GM10248 (cell line): ENCODE measurements at regions of chr6 and their contacts with region 1.

Region 1: GRCh38 chr6:17584241-17584803 is 15.8 kb upstream of the FAM8A1 start:
- DNase-seq: peak; percentile 59
- CTCF ChIP-seq: peak; percentile 72

Region 2: DNA sequence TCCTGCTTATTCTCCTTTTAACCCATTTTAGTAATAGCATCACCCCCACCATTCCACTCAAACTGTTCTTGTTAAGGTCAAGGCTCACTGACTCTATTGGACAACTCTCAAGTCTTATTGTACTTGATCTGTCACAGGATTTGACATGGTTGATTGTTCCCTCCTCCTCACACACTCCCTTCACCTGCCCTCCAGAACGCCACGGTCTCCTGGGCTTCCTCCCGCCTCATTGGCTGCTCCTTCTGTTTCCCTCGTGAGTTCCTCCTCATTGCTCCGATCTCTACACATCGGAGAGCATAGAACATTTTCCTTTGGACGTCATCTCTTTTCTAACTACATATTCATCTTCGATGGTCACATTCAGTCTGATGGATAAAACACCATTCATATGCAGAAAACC is 427.4 kb before region 1 on chr6:
- CTCF ChIA-PET with region 1: interaction called, 10 read pairs
- POLR2A ChIA-PET with region 1: no interaction called
- DNase-seq: no peak
- CTCF ChIP-seq: no peak

Region 3: DNA sequence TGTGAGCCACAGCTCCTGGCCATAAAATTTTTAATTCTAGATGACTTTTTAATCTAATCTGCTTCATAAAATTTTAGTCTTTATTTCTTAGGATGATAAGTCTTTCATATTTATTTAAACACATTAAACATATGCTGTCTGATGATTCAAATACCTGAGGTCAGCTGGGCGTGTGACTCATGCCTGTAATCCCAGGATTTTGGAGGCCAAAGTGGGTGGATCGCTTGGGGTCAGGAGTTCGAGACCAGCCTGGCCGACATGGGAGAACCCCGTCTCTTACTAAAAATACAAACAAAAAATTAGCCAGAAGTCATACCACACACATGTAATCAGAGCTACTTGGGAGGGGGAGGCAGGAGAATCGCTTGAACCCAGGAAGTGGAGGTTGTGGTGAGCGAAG is 250.1 kb before region 1 on chr6:
- CTCF ChIA-PET with region 1: no interaction called
- POLR2A ChIA-PET with region 1: no interaction called
- DNase-seq: no peak
- CTCF ChIP-seq: no peak

Region 4: DNA sequence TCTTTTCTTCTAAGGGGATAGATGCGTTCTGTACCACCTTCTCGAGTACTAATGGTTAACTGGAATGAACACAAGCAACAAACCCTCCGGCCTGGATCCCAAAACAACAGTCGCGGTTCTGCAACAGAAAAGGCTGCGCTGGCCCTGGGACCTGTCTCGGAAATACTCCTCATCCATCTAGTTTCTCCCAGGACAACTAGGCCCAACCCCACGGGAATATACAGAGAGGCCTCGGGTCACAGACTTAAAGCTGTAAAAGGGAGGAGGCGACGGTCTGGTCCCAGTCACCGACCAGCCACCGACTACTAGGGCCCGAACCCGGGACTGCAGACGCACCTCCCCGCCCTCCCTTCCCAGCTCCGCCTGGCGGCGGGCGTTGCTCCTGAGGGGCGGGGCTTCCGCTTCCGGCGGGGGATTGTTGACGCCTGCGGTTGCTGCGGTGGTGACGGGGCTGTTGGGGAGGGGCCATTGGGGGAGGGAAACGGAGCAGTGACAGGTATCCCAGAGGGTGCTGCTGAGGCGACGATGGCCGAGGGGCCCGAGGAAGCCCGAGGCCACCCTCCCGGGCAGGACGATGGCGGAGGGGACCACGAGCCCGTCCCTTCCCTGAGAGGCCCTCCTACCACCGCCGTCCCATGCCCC is 15.7 kb after region 1 on chr6 and contains the start of gene FAM8A1:
- CTCF ChIA-PET with region 1: interaction called, 10 read pairs
- POLR2A ChIA-PET with region 1: interaction called, 4 read pairs
- DNase-seq: peak; percentile 95
- CTCF ChIP-seq: peak; percentile 31

Region 5: DNA sequence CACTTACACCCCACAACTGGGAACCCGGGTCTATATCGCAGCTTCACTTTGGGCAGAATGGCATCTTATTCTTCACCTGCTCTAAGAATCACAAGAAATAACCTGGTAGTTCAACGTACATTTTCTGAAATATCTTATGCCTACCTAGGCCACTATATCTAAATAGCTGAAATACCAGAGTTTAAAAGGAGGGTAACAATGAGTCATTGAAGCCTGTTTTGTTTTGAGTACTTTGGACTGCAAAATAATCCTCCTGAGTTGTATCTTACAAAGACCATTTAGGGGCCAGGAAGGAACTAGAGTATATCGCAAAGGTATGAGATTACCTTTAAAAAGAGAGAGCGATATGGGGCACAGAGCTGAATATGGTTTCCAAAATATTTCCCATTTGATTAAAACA is 219.1 kb after region 1 on chr6:
- CTCF ChIA-PET with region 1: interaction called, 24 read pairs
- POLR2A ChIA-PET with region 1: no interaction called
- DNase-seq: no peak
- CTCF ChIP-seq: no peak

Region 6: DNA sequence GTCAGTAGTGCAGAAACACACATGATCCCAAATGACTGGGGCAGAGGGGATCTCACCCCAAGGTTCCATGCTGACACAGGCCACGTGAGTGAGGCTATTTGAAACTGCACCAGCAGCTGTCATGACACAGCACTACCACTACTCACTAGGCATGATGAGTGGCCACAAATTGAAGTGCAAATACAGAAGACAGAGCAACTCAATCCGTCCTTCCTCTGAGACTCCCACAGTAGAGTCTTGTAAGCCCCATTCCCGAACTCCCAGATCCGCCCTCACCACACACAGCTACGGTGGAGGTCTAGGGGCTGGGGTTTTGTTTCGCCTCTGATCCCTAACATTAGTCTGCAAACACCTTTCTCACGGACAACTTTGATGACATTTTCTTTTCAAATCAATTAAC is 235.7 kb after region 1 on chr6:
- CTCF ChIA-PET with region 1: interaction called, 34 read pairs
- POLR2A ChIA-PET with region 1: no interaction called
- DNase-seq: no peak
- CTCF ChIP-seq: no peak